Activated naive CD4-positive, alpha-beta T cell treated with anti-CD3 and anti-CD28 coated beads for 36 hours (primary cell): ENCODE measurements at regions of chr1 and their contacts with region 1.

Region 1: GRCh38 chr1:116372587-116373444 is at the start of gene ATP1A1:
- DNase-seq: peak; percentile 98
- H3K4me3 Mint-ChIP-seq: peak within 1 kb of the TSS; percentile 92
- H3K27ac Mint-ChIP-seq: peak within 1 kb of the TSS; percentile 95
- H3K4me1 Mint-ChIP-seq: peaks cover 30% of the 10 kb centered on the region
- H3K27me3 Mint-ChIP-seq: no peaks in the 10 kb centered on the region
- total RNA-seq, gene ATP1A1: 360 to 370 TPM

Region 2: GRCh38 chr1:116311756-116312691 is 60.8 kb before region 1 on chr1:
- CTCF ChIA-PET with region 1: no interaction called
- intact Hi-C with region 1: no loop called
- DNase-seq: no peak
- H3K4me3 Mint-ChIP-seq: no peak overlapping the region
- H3K27ac Mint-ChIP-seq: no peak overlapping the region
- H3K4me1 Mint-ChIP-seq: peaks cover 28% of the 10 kb centered on the region
- H3K27me3 Mint-ChIP-seq: no peaks in the 10 kb centered on the region

Region 3: DNA sequence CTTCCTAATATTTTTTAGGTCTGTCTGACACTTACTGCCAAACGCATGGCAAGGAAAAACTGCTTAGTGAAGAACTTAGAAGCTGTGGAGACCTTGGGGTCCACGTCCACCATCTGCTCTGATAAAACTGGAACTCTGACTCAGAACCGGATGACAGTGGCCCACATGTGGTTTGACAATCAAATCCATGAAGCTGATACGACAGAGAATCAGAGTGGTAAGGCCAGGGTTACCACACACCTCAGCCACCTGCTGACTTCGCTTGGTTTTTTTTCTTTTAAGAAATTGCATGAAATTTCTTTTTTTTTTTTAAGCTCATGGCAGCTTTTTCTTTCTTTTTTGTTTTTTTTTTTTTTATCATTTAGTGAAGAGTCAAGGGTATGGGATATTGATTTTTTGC is 17.4 kb after region 1 on chr1:
- CTCF ChIA-PET with region 1: interaction called, 3 read pairs
- intact Hi-C with region 1: loop called (anchors 2 kb)
- DNase-seq: peak; percentile 49
- H3K4me3 Mint-ChIP-seq: no peak overlapping the region
- H3K27ac Mint-ChIP-seq: peak overlapping the region; percentile 79
- H3K4me1 Mint-ChIP-seq: peaks cover 45% of the 10 kb centered on the region
- H3K27me3 Mint-ChIP-seq: no peaks in the 10 kb centered on the region

Region 4: GRCh38 chr1:116405241-116406135 is 32.7 kb after region 1 on chr1:
- CTCF ChIA-PET with region 1: no interaction called
- intact Hi-C with region 1: no loop called
- DNase-seq: no peak
- H3K4me3 Mint-ChIP-seq: no peak overlapping the region
- H3K27ac Mint-ChIP-seq: peak overlapping the region; percentile 24
- H3K4me1 Mint-ChIP-seq: peaks cover 24% of the 10 kb centered on the region
- H3K27me3 Mint-ChIP-seq: no peaks in the 10 kb centered on the region